Activated CD4-positive, alpha-beta T cell treated with anti-CD3 and anti-CD28 coated beads, Interleukin-2, amount 10 ng/mL, durations not matched to agents 24 days and 14 days (primary cell): ENCODE measurements at regions of chr13 and their contacts with region 1.

Region 1: DNA sequence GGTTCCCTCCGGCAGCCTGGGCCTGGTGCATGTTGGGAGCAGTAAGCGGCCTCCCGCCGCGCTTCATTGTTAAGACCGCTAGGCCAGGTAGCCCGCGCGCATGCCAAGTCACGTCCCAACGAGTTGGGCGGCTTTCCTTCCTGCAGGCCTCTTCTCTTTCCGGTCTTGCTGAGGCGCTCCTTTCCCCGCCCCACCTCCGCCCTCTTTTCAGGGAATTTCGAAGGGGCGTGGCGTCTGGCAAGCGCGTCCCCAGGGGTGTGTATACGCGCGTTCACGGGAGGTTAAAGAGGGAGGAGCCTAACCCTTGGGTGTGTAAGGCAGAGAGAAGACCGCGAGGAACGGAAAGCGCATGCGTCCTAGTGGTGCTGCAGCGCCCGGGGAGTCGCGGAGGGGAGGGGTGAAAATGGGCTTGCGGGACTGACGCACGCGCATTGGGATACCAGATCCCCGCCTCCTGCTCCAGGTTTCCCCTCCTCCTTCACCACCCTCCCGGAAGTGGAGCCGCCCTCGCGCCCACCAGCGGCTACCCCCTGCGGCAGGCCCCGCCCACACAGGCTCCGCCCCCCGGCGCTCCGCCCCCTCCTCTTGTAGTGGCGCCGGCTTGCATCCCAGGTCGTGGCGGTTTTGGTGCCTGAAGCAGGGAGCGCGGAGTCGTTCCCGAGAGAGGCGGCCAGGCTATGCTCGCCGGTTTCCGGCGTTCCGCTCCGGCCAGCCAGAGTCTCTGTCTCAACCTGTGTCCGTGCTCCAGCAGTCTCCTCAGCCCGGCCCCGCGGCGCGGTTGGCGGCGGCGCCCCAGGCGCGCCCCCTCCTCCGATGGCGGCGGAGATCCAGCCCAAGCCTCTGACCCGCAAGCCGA is at the start of gene WDFY2:
- DNase-seq: peak; percentile 100
- H3K4me3 Mint-ChIP-seq: peak within 1 kb of the TSS; percentile 90
- H3K27ac Mint-ChIP-seq: peak within 1 kb of the TSS; percentile 97
- H3K4me1 Mint-ChIP-seq: peaks cover 37% of the 10 kb centered on the region
- H3K27me3 Mint-ChIP-seq: peaks cover 6% of the 10 kb centered on the region
- total RNA-seq, gene WDFY2: 9.1 and 11.1 TPM in 2 replicates

Region 2: GRCh38 chr13:51154029-51154555 is 430.0 kb before region 1 on chr13:
- intact Hi-C with region 1: loop called (anchors 10 kb)
- DNase-seq: peak; percentile 58
- H3K4me3 Mint-ChIP-seq: peak overlapping the region; percentile 21
- H3K27ac Mint-ChIP-seq: peak overlapping the region; percentile 83
- H3K4me1 Mint-ChIP-seq: peaks cover 15% of the 10 kb centered on the region
- H3K27me3 Mint-ChIP-seq: peaks cover 8% of the 10 kb centered on the region

Region 3: GRCh38 chr13:51614350-51614786 is 30.3 kb after region 1 on chr13:
- intact Hi-C with region 1: loop called (anchors 1 kb)
- DNase-seq: peak; percentile 84
- H3K4me3 Mint-ChIP-seq: peak overlapping the region; percentile 82
- H3K27ac Mint-ChIP-seq: peak overlapping the region; percentile 97
- H3K4me1 Mint-ChIP-seq: peaks cover 22% of the 10 kb centered on the region
- H3K27me3 Mint-ChIP-seq: no peaks in the 10 kb centered on the region

Region 4: DNA sequence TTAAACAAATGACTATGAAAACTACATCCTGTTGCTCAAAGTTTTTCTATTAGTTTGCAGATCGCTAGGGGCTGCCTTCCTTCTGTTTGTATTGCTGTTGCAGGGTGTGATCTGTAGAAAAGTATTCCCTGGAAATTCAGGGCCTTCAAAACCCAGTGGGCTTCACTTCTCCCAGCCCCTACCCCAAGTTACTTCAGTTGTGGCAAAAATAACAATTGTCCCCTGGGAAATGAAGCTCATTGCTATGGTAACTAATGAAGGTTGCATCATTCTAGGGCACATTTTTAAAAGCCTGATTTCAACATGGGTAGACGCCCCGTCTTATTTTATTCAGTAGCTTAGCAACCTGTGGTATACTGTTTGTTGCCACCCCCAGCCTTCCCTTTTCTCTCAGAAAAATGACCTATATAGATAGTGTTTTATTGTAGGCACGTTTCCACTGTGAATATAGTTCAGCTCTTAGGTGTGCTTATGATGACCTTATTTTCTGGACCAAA is 61.1 kb after region 1 on chr13:
- intact Hi-C with region 1: loop called (anchors 2 kb)
- DNase-seq: peak; percentile 71
- H3K4me3 Mint-ChIP-seq: peak overlapping the region; percentile 24
- H3K27ac Mint-ChIP-seq: peak overlapping the region; percentile 75
- H3K4me1 Mint-ChIP-seq: peaks cover 28% of the 10 kb centered on the region
- H3K27me3 Mint-ChIP-seq: no peaks in the 10 kb centered on the region

Region 5: GRCh38 chr13:51764184-51765141 is 180.4 kb after region 1 on chr13:
- intact Hi-C with region 1: loop called (anchors 1 kb)
- DNase-seq: peak; percentile 86
- H3K4me3 Mint-ChIP-seq: peak overlapping the region; percentile 88
- H3K27ac Mint-ChIP-seq: peak overlapping the region; percentile 96
- H3K4me1 Mint-ChIP-seq: peaks cover 39% of the 10 kb centered on the region
- H3K27me3 Mint-ChIP-seq: no peaks in the 10 kb centered on the region

Region 6: DNA sequence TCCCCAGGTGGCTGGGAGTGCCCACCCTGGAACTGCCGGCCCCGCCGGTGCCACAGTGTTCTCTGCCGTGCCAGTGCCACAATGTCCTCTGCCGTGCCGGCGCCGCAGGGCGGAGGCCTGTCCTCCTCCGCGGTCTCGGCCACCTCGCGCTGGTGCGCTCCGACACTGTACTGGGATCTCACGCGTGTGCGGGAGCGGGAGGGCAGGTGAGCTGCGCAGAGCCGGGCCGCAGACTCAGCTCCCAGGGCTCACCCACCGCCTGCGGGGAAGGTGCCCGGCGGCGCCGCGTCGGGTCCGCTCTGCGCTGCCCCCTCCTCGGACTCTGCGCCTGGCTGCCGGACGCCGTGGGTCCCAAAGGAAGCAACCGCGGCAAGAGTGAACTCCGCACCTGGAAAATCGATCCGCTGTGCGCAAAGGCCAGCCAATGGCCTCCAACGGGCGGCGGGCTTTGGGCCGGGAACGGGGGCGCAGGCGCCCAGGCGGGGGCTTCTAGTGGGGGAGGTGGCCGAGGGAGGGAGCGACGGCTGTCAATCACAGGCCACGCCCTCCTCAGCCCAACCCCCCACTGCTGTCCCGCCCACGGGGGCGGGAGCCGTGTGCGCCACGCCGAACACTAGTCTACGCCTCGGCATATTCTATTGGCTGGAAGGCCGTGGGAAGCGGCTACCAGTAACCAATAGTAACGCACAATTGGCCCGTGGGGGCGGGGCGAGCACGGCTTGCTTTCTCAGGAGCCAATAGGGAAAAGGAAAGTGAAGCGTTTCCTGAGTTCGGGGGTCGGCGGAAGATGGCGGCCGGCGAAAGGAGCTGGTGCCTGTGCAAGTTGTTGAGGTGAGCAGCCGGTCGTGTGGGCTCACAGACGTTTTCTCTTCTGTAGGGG is 427.8 kb after region 1 on chr13 and contains the start of gene ALG11:
- intact Hi-C with region 1: loop called (anchors 10 kb)
- DNase-seq: peak; percentile 100
- H3K4me3 Mint-ChIP-seq: peak within 1 kb of the TSS; percentile 99
- H3K27ac Mint-ChIP-seq: peak within 1 kb of the TSS; percentile 93
- H3K4me1 Mint-ChIP-seq: peaks cover 8% of the 10 kb centered on the region
- H3K27me3 Mint-ChIP-seq: peaks cover 34% of the 10 kb centered on the region
- total RNA-seq, gene ALG11: 26.7 and 28.0 TPM in 2 replicates